ENCODE measurements at regions of chr3 and their contacts with region 1.

Region 1: GRCh38 chr3:73086071-73086494 is 24.6 kb downstream of the EBLN2 start:
- DNase-seq: no peak
- H3K4me3 ChIP-seq: no peak overlapping the region
- H3K27ac ChIP-seq: no peak overlapping the region
- H3K4me1 ChIP-seq: no peaks in the 10 kb centered on the region
- H3K27me3 ChIP-seq: no peaks in the 10 kb centered on the region
- CTCF ChIP-seq: peak; percentile 58 to 86 (median 71)

Region 2: GRCh38 chr3:71725279-71725991 is 1360.6 kb before region 1 on chr3 and contains the start of gene EIF4E3:
- intact Hi-C with region 1: loop called (anchors 10 kb)
- DNase-seq: peak in 1 of 2 donors; percentile 68
- H3K4me3 ChIP-seq: peak within 1 kb of the TSS; percentile 90 to 95
- H3K27ac ChIP-seq: peak within 1 kb of the TSS; percentile 63 to 74
- H3K4me1 ChIP-seq: peaks cover 0 to 6% of the 10 kb centered on the region in 2 donors
- H3K27me3 ChIP-seq: no peaks in the 10 kb centered on the region
- CTCF ChIP-seq: no peak
- total RNA-seq, gene EIF4E3: 4.4 TPM

Region 3: DNA sequence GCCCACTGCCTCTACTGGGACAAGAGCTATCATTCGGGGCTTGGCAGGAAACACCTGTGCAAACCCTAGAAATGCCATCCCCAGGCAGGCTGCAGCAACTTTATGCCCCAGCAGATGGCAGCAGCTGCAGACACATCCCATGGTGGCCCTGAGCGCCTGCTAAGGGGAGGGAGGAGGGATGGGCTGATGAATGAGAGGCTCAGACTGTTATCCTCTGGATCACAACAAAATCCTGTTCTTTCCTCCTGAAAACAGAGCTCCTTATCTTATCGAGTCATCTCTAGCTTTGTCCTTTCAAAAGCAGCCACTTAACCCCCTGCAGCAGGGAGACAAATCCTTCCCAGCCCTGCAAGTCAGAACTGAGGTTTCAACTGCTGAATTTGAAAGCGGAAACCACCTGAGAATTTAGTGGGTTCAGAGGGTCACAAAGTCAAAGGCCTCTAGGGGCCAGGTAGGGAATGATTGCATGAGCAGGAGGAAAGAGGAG is 1210.6 kb before region 1 on chr3:
- intact Hi-C with region 1: loop called (anchors 10 kb)
- DNase-seq: peak; percentile 22 to 74
- H3K4me3 ChIP-seq: no peak overlapping the region
- H3K27ac ChIP-seq: no peak overlapping the region
- H3K4me1 ChIP-seq: no peaks in the 10 kb centered on the region
- H3K27me3 ChIP-seq: no peaks in the 10 kb centered on the region
- CTCF ChIP-seq: peak; percentile 67 to 83 (median 73)

Region 4: GRCh38 chr3:73215281-73215680 is 129.2 kb after region 1 on chr3:
- intact Hi-C with region 1: no loop called
- DNase-seq: no peak
- H3K4me3 ChIP-seq: no peak overlapping the region
- H3K27ac ChIP-seq: peak overlapping the region; percentile 39 to 62
- H3K4me1 ChIP-seq: peaks cover 2 to 18% of the 10 kb centered on the region in 2 donors
- H3K27me3 ChIP-seq: no peaks in the 10 kb centered on the region
- CTCF ChIP-seq: no peak

Measured in ascending aorta (tissue), 2 donors.